ENCODE measurements at regions of chr20 and their contacts with region 1.

Region 1: GRCh38 chr20:44733341-44734069 is 12.2 kb upstream of the KCNK15 start:
- DNase-seq: peak; percentile 73
- ATAC-seq: peak; percentile 74
- H3K4me3 Mint-ChIP-seq: no peak overlapping the region
- H3K27ac Mint-ChIP-seq: no peak overlapping the region
- H3K4me1 Mint-ChIP-seq: peaks cover 28% of the 10 kb centered on the region
- H3K27me3 Mint-ChIP-seq: no peaks in the 10 kb centered on the region

Region 2: GRCh38 chr20:44598423-44599305 is 134.8 kb before region 1 on chr20:
- CTCF ChIA-PET with region 1: no interaction called
- DNase-seq: no peak
- ATAC-seq: peak; percentile 76
- H3K4me3 Mint-ChIP-seq: peak overlapping the region; percentile 44
- H3K27ac Mint-ChIP-seq: peak overlapping the region; percentile 58
- H3K4me1 Mint-ChIP-seq: peaks cover 11% of the 10 kb centered on the region
- H3K27me3 Mint-ChIP-seq: no peaks in the 10 kb centered on the region

Region 3: GRCh38 chr20:44720617-44720993 is 12.9 kb before region 1 on chr20:
- CTCF ChIA-PET with region 1: interaction called, 20 read pairs
- DNase-seq: no peak
- ATAC-seq: no peak
- H3K4me3 Mint-ChIP-seq: no peak overlapping the region
- H3K27ac Mint-ChIP-seq: no peak overlapping the region
- H3K4me1 Mint-ChIP-seq: peaks cover 2% of the 10 kb centered on the region
- H3K27me3 Mint-ChIP-seq: no peaks in the 10 kb centered on the region